ENCODE measurements at regions of chr19 and their contacts with region 1.

Region 1: GRCh38 chr19:13262450-13262849 is 112.2 kb downstream of the IER2 start:
- DNase-seq: no peak
- ATAC-seq: peak in 1 of 2 donors; percentile 39
- H3K4me3 ChIP-seq: no peak overlapping the region
- H3K27ac ChIP-seq: no peak overlapping the region
- H3K4me1 ChIP-seq: peaks cover 0 to 9% of the 10 kb centered on the region in 2 donors
- H3K27me3 ChIP-seq: no peaks in the 10 kb centered on the region
- CTCF ChIP-seq: peak; percentile 36 to 64 (median 54)
- POLR2A ChIP-seq: no peak

Region 2: GRCh38 chr19:12965017-12965811 is 297.2 kb before region 1 on chr19:
- in situ Hi-C with region 1: loop called in 3 of 4 experiments (anchors 10 to 25 kb)
- intact Hi-C with region 1: no loop called
- DNase-seq: peak in 1 of 2 donors; percentile 74
- ATAC-seq: peak; percentile 96 to 97
- H3K4me3 ChIP-seq: peak overlapping the region; percentile 56 to 69 (median 60)
- H3K27ac ChIP-seq: peak overlapping the region; percentile 60 to 72 (median 68)
- H3K4me1 ChIP-seq: peaks cover 0 to 12% of the 10 kb centered on the region in 2 donors
- H3K27me3 ChIP-seq: no peaks in the 10 kb centered on the region
- CTCF ChIP-seq: peak; percentile 92 to 98 (median 95)
- POLR2A ChIP-seq: no peak

Region 3: DNA sequence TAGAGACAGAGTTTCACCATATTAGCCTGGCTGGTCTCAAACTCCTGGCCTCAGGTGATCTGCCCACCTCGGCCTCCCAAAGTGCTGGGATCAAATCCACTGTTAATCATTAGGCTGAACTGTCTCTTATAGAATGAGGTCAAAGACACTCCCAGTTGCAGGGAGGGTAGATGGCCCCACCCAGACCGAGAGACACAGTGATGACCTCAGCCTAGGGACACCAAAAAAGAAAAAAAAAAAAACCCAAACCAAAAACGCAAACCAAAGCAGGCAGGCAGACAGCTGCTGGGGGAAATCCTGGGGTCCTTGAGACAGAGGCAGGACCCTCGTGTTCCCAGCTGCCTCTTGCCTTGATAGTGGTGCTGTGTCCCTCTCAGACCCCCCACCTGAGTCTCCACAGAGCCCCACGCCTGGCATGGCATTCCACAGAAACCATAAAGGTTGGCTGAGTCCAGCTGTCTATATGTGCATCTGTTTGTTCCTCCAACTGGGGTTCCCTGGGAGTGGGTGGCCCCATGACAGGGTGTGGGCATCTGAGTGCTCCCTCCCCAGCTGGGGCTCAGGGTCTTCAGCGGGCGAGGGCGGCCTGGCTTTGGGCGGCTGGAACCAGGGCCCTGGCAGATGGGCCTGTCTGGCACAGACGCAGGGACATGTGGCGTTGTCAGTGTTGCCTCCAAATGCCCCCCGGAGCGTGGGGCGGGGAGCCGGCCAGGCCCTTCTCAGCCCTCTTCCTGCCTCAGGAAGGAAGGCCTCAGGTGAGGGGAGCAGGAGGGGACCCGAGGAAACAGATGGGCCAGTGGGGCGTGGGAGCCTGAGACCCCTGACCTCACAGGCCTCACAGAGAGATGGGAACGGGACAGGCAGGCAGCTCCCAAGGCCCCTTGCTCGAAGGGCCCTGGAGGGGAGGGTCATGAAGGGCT is 287.9 kb before region 1 on chr19:
- in situ Hi-C with region 1: loop called (anchors 5 to 25 kb)
- intact Hi-C with region 1: no loop called
- DNase-seq: no peak
- ATAC-seq: no peak
- H3K4me3 ChIP-seq: no peak overlapping the region
- H3K27ac ChIP-seq: no peak overlapping the region
- H3K4me1 ChIP-seq: peaks cover 0 to 4% of the 10 kb centered on the region in 2 donors
- H3K27me3 ChIP-seq: no peaks in the 10 kb centered on the region
- CTCF ChIP-seq: no peak
- POLR2A ChIP-seq: no peak

Region 4: DNA sequence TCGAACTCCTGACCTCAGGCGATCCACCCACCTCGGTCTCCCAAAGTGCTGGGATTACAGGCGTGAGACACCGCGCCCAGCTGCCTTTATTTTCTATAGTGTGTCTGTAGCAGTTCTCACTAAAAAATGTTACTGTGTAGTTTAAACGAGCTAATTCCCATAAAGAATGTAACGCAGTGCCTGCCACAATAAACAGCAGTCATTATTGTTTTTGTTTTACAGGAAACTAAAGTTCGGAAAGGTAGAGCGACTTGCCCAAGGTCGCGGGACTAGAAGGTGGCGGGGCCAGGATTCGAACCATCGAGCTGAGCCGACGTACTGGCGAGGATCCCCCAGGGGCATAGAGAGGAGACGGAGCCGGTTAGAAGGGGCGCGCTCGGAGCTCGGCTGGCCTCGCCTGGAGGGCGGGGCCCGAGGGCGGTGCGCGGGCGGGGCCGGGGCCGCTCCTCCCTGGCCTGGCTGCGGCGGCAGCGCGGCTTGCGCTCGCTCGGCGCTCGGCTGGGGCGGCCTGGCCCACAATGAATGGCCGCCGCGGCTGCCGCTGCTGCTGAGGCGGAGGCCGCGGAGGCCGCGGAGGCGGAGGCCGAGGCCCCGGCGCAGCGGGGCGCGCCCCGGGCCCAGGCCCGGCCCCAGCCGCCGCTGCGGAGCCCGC is 144.6 kb before region 1 on chr19 and contains the start of gene NACC1:
- in situ Hi-C with region 1: loop called in 1 of 4 experiments (anchors 25 kb)
- intact Hi-C with region 1: no loop called
- DNase-seq: peak; percentile 82 to 88
- ATAC-seq: peak; percentile 82 to 83
- H3K4me3 ChIP-seq: peak within 1 kb of the TSS; percentile 90 to 100 (median 94)
- H3K27ac ChIP-seq: peak within 1 kb of the TSS; percentile 79 to 93 (median 86)
- H3K4me1 ChIP-seq: peaks cover 28 to 36% of the 10 kb centered on the region in 2 donors
- H3K27me3 ChIP-seq: no peaks in the 10 kb centered on the region
- CTCF ChIP-seq: peak in 1 of 5 experiments; percentile 11
- POLR2A ChIP-seq: no peak
- total RNA-seq, gene NACC1: 36.3 to 81.3 (median 49.4) TPM

Region 5: GRCh38 chr19:13189600-13189999 is 72.8 kb before region 1 on chr19:
- in situ Hi-C with region 1: loop called in 1 of 4 experiments (anchors 10 kb)
- intact Hi-C with region 1: loop called (anchors 2 kb)
- DNase-seq: no peak
- ATAC-seq: no peak
- H3K4me3 ChIP-seq: no peak overlapping the region
- H3K27ac ChIP-seq: no peak overlapping the region
- H3K4me1 ChIP-seq: no peaks in the 10 kb centered on the region
- H3K27me3 ChIP-seq: no peaks in the 10 kb centered on the region
- CTCF ChIP-seq: no peak
- POLR2A ChIP-seq: no peak

Region 6: DNA sequence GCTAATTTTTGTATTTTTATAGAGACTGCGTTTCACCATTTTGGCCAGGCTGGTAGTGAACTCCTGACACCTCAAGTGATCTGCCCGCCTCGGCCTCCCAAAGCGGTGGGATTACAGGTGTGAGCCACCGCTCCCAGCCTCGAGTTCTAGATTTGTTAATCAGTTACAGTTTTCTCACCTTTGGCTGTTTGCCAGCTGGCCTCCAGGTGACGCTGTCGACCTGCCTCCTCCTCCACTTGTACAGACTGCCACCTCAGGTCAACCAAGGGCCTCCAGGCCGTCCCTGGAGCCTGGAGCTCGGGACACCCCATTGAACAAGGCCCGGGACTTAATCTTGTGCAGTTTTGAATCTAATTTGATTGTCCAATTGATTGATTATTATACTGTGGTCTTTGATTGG is 66.8 kb before region 1 on chr19:
- in situ Hi-C with region 1: loop called in 1 of 4 experiments (anchors 10 kb)
- intact Hi-C with region 1: no loop called
- DNase-seq: no peak
- ATAC-seq: no peak
- H3K4me3 ChIP-seq: no peak overlapping the region
- H3K27ac ChIP-seq: no peak overlapping the region
- H3K4me1 ChIP-seq: no peaks in the 10 kb centered on the region
- H3K27me3 ChIP-seq: no peaks in the 10 kb centered on the region
- CTCF ChIP-seq: no peak
- POLR2A ChIP-seq: no peak

Region 7: DNA sequence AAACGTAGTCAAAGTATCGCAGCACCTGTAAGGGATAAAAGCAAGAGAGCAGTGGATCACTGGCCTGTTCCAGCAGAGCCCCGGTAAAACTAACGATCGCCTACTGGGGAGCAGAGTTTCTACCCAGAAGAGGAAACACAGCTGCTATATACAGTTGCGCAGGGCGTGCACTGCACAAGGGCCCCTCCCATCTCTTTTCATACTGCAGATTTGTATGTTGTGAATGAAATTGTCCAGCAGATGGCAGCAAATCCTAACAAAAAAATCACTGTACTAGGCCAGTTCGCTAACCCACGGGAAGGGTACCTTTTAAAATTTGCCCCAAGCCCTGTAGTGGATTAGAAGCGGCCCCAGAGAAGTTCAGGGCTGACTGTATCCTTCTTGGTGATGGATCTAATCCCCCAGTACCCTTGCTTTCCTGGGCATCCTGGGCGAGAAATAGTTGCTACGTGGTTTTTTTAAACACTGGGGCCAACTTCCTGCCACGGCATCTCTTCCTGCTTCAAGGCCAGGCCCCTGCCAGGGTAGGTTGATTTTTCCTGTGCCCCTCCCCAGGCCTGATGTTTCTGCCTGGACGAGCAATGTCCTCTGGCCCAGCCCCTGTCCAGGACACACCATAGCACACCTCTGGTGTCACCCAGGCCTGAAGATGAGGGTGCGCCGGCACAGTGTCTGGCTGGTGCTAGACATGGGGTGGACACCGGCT is 14.8 kb after region 1 on chr19:
- in situ Hi-C with region 1: no loop called
- intact Hi-C with region 1: no loop called
- DNase-seq: peak in 1 of 2 donors; percentile 15
- ATAC-seq: peak; percentile 89 to 91
- H3K4me3 ChIP-seq: no peak overlapping the region
- H3K27ac ChIP-seq: no peak overlapping the region
- H3K4me1 ChIP-seq: no peaks in the 10 kb centered on the region
- H3K27me3 ChIP-seq: no peaks in the 10 kb centered on the region
- CTCF ChIP-seq: peak; percentile 56 to 75 (median 65)
- POLR2A ChIP-seq: no peak

Measured in gastrocnemius medialis (tissue), 4 donors.